Ascending aorta (tissue), 2 donors: ENCODE measurements at regions of chr5 and their contacts with region 1.

Region 1: GRCh38 chr5:142246258-142246657 is 78.6 kb downstream of the SPRY4 start:
- DNase-seq: peak; percentile 20 to 90
- H3K4me3 ChIP-seq: no peak overlapping the region
- H3K27ac ChIP-seq: peak overlapping the region; percentile 81 to 88
- H3K4me1 ChIP-seq: peaks cover 3 to 42% of the 10 kb centered on the region in 2 donors
- H3K27me3 ChIP-seq: no peaks in the 10 kb centered on the region
- CTCF ChIP-seq: no peak

Region 2: DNA sequence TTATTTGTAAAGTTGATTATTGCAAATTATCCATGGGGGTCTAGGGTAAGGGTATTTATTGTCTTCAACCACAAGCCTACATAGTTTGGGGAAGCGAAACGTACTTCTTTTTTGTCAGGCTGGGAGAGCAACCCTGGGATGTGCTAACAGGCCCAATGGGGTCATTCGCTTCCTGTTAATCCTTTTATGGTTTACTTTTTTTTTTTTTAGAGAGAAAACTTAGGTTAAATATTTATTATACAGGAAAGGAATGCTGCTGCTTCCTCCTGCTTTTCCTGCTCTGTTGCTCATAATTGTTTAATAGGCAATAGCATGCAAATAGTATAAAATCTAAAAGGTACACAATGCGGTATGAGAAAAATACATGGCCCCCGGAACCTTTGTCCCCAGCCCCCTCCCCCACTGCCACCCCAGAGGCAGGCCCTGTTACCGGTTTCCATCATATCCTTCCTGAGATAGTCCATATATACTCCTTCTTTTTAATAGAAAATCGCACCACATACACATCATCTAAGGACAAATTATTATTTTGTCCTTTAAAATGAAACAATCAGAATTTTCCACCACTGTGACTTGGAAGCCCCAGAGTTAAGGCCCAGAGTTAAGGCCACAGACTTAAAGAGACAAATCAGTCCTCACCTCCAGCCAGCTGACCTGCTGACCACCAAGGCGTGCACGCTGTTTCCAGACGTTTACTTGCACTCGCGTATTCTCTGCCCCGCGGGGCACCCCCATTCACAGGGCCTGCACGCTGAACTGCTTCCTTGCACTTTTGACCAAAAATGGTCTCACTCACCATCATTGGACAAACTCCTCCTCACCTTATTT is 53.8 kb before region 1 on chr5:
- intact Hi-C with region 1: loop called (anchors 2 kb)
- DNase-seq: peak in 1 of 2 donors; percentile 45
- H3K4me3 ChIP-seq: peak overlapping the region in 1 of 2 donors; percentile 28
- H3K27ac ChIP-seq: peak overlapping the region; percentile 25 to 76
- H3K4me1 ChIP-seq: peaks cover 0 to 19% of the 10 kb centered on the region in 2 donors
- H3K27me3 ChIP-seq: no peaks in the 10 kb centered on the region
- CTCF ChIP-seq: no peak

Region 3: DNA sequence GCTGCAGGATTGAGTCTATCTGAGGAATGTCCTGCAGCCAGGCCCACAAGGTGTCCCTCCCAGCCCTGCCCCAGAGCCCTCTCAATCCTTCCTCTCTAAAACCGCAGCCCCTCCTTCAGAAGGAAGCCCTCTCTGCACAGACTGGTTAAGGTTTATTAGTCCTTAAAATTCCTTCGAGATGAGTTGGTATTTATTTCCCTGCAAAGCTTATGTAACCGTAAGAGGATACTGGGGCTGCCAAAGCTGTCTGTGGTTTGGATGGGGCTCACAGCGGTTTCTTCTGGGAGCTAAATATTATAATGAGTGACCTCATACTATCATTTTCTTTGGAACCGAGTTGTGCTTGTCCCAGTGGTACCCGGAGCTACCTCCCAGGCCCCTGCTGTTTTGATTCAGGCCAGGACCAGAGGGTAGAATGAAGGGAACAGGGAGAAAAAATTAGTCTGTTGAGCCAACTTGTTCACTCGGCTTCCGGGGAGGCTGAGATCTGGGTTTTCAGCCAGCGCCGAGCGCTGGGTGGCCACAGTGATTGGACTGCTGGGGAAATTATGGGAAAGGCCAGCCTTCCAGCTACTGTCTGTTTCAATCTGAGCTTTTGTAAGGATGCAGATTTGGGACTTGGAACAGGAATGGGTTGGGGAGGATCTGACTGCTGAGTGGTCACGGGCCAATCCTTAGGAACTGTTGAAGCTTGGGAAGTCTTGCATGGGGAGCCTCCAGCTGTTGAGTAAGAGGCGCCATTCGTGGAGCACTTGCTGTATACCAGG is 30.2 kb before region 1 on chr5:
- intact Hi-C with region 1: loop called (anchors 1 kb)
- DNase-seq: peak; percentile 23 to 92
- H3K4me3 ChIP-seq: peak overlapping the region in 1 of 2 donors; percentile 4
- H3K27ac ChIP-seq: peak overlapping the region; percentile 67 to 80
- H3K4me1 ChIP-seq: peaks cover 4 to 13% of the 10 kb centered on the region in 2 donors
- H3K27me3 ChIP-seq: no peaks in the 10 kb centered on the region
- CTCF ChIP-seq: no peak

Region 4: GRCh38 chr5:142296914-142297417 is 50.7 kb after region 1 on chr5:
- intact Hi-C with region 1: loop called (anchors 2 kb)
- DNase-seq: peak in 1 of 2 donors; percentile 83
- H3K4me3 ChIP-seq: no peak overlapping the region
- H3K27ac ChIP-seq: peak overlapping the region; percentile 83 to 94
- H3K4me1 ChIP-seq: peaks cover 9 to 23% of the 10 kb centered on the region in 2 donors
- H3K27me3 ChIP-seq: no peaks in the 10 kb centered on the region
- CTCF ChIP-seq: no peak

Region 5: DNA sequence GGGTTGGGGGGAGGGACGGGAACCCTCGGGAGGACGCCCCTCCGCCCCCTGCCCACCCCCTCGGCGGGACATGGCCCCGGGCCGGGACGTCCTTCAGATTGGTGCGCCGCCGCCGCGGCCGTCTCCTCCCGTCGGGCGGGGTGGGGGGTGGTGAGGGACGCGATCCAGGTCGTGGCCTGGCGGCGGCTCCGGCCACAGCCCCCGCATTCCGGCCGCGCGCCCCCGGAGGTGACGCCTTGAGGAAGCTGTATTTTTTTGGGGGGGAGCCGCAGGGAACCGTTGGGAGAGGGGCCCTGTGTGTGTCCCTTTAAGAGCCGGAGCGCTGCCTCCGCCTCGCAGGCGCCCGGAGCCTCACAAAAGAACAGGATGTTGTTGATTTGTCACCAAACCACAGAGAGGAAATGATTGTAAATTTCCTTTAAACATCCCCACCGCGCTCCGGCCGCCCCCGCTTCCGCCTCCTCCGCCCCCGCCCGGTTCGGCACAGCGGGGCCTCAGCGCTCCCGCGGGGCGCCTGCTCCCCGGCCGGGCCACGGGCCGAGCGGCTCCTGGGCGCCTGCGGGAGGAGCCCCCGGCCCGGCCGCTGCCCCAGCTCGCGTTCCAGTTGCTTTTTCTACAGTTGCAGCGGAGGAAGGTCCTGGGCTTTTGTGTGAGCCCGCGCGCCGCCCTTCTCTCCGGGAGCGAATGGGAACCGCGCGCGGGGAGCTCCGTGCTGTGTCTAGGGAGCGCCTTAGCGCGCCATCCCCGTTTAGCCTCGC is 110.6 kb after region 1 on chr5:
- intact Hi-C with region 1: loop called (anchors 5 kb)
- DNase-seq: peak; percentile 67 to 95
- H3K4me3 ChIP-seq: peak overlapping the region; percentile 82 to 89
- H3K27ac ChIP-seq: peak overlapping the region; percentile 99 to 100
- H3K4me1 ChIP-seq: peaks cover 8 to 9% of the 10 kb centered on the region in 2 donors
- H3K27me3 ChIP-seq: no peaks in the 10 kb centered on the region
- CTCF ChIP-seq: peak in 1 of 3 experiments; percentile 14

Region 6: DNA sequence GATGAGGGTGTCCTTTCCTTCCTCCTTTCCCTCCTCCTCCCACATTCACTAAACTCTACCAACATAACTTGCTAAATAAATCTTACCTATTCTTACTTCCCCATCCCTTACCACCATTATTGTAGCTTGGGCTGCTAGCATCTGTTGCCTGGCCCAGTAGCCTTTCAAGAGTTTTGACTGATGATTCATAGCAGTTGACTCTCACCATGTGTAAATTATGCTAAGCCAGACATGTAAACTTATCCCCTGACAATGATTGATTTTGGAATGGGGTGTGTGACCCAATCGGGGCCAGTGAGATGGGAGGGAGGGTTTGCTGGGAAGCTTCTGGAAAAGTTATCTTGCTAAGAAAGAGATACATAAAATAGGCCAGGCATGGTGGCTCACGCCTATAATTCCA is 240.3 kb after region 1 on chr5:
- intact Hi-C with region 1: no loop called
- DNase-seq: no peak
- H3K4me3 ChIP-seq: no peak overlapping the region
- H3K27ac ChIP-seq: no peak overlapping the region
- H3K4me1 ChIP-seq: no peaks in the 10 kb centered on the region
- H3K27me3 ChIP-seq: no peaks in the 10 kb centered on the region
- CTCF ChIP-seq: no peak